ENCODE measurements at regions of chr22 and their contacts with region 1.

Region 1: DNA sequence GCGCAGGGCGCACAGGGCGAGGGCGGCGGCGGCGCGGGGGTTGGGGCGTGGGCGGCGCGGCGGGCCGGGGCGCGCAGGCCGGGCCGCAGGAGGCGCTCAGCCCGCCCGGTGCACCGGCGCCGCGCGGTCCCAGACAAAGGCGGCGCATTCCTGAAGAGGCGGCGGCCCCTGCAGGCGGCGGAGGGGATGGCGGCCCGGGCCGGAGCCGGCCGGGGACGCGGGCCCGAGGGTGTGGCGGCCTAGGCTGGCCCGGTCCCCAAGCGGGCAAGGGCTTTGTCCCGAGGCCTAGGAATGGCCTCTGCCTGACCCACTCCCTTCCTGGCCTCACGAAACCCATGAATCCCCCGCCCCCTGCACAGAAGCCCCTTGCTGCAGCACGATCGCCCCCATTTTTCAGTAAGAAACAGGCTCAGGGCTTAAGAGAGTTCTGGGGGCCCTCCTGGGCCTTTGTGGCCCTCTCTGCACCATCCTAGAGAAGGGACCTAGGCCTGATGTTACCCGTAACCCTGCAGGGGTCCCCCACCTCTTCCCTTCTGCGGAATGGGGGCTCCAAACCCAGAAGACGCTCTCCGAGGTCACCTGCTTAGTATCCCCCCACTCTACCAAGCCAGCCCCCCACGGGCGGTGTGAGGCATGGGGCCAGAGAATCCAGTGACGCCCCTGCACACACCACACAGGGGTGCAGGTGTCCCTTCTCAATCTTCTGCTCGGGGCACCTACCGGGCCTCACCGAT is at the start of gene RTN4R:
- DNase-seq: no peak
- H3K4me3 ChIP-seq: peak within 1 kb of the TSS; percentile 1; the same call in 1 of the 2 replicates
- CTCF ChIP-seq: peak; percentile 79

Region 2: DNA sequence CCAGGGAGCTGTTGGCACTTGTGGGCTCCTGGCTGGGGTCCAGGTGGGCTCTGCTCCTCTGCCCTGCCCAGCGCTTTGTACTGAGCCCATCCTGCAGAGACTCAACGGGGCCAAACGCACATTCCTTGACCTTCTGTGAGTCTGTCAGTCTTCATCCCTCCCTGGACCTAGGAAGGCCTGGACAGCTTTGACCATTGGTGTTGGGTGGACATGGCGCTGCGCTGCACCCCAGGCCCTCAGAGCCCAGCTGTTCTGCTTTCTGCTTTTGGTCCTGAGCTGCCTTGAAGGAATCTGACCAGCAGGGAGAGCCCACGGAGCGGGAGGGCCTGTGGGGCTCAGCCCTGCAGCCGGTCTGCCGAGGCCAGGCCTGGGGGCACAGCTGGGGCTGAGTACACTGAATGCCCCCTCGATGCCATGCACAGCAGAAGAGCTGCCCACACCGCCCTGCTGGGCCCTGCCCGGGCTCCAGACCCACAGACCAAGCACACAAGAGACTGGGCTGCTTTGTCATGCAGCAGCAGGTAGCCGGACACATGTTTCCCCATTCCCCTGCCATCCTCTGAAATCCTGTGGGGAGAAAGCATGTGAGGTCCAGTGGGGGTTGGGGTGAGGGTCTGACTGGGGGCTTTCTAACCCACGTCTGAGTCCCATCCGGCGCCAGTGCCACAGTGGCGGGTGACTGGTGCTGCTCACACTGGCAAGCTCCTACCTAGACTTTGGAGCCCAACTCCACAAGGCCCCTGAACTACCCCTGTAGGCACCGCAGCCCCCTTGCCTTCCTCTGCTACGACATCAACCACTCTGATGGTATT is 93.5 kb before region 1 on chr22:
- CTCF ChIA-PET with region 1: interaction called, 10 read pairs
- POLR2A ChIA-PET with region 1: no interaction called
- DNase-seq: no peak
- H3K4me3 ChIP-seq: no peak overlapping the region
- CTCF ChIP-seq: peak; percentile 41

Region 3: GRCh38 chr22:20205964-20206708 is 62.3 kb before region 1 on chr22:
- CTCF ChIA-PET with region 1: no interaction called
- POLR2A ChIA-PET with region 1: no interaction called
- DNase-seq: no peak
- H3K4me3 ChIP-seq: peak overlapping the region; percentile 55
- CTCF ChIP-seq: no peak

Measured in AG04449 (cell line).